K562 (cell line): ENCODE measurements at regions of chr11 and their contacts with region 1.

Region 1: GRCh38 chr11:86938900-86939880 is 16.0 kb downstream of the FZD4 start:
- DNase-seq: peak; percentile 38 to 81 (median 46)
- ATAC-seq: peak; percentile 59
- H3K4me3 ChIP-seq: no peak overlapping the region
- H3K27ac ChIP-seq: peak overlapping the region; percentile 75
- H3K4me1 ChIP-seq: peaks cover 18 to 53% of the 10 kb centered on the region in 2 experiments
- H3K27me3 ChIP-seq: no peaks in the 10 kb centered on the region
- CTCF ChIP-seq: peak; percentile 40 to 79 (median 67); a peak in 5 of 6 replicates
- EP300 ChIP-seq: no peak
- POLR2A ChIP-seq: no peak
- RAD21 ChIP-seq: peak; percentile 70 to 82

Region 2: DNA sequence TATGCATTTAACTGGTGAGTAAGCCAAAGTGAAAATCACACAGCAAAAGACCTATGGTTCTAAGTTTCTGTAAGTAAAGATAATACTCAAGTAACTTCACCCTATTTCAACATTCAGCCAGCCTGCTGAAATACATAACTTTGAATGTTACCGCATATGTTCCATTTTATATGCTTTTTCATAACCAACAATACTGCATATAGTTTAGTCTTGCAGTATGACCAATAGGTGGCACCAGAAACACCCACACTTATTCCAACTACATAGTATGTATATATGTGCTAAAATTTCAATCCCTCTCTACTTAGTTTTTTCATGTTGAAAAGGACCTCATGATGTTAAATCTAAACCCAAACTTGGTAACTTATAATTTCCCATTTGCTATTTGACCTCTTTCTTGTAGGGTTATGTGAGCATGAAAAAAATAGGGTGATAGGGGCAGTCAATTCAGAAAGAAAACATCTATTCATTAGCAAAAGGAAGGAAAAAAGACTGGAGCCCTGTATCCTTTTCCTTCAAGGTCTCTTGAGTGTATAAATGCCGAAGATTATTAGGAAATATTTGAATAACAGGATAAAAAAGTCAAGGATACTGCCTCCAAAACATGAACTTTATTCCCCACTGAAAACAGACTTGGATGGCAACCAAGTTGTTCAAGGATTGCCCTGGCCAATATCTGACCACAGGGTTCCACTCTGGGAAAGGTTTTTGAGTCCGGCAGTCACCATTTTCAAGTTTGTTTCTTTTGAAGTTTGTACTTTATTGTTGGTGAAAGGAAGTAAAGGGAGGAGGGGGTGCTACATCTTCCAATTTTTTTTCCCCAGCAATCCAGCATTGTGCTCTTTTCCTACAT is 39.8 kb after region 1 on chr11:
- CTCF ChIA-PET with region 1: interaction called, 3 read pairs
- POLR2A ChIA-PET with region 1: no interaction called
- in situ Hi-C with region 1: no loop called
- intact Hi-C with region 1: loop called (anchors 5 kb)
- DNase-seq: peak; percentile 22 to 66 (median 36)
- ATAC-seq: peak; percentile 96
- H3K4me3 ChIP-seq: no peak overlapping the region
- H3K27ac ChIP-seq: no peak overlapping the region
- H3K4me1 ChIP-seq: no peaks in the 10 kb centered on the region; a peak in 1 of 5 replicates
- H3K27me3 ChIP-seq: no peaks in the 10 kb centered on the region
- CTCF ChIP-seq: peak; percentile 46 to 78 (median 48); a peak in 5 of 6 replicates
- EP300 ChIP-seq: no peak
- POLR2A ChIP-seq: no peak
- RAD21 ChIP-seq: peak; percentile 53 to 78

Region 3: GRCh38 chr11:87097582-87097981 is 158.4 kb after region 1 on chr11:
- CTCF ChIA-PET with region 1: no interaction called
- POLR2A ChIA-PET with region 1: no interaction called
- in situ Hi-C with region 1: no loop called
- intact Hi-C with region 1: loop called (anchors 5 kb)
- DNase-seq: peak; percentile 62 to 84 (median 66)
- ATAC-seq: peak; percentile 99
- H3K4me3 ChIP-seq: no peak overlapping the region
- H3K27ac ChIP-seq: peak overlapping the region; percentile 48; the same call in 2 of the 3 replicates
- H3K4me1 ChIP-seq: peaks cover 0 to 9% of the 10 kb centered on the region in 2 experiments; a peak in 2 of 5 replicates
- H3K27me3 ChIP-seq: no peaks in the 10 kb centered on the region
- CTCF ChIP-seq: peak; percentile 76 to 81 (median 80)
- EP300 ChIP-seq: no peak
- POLR2A ChIP-seq: no peak
- RAD21 ChIP-seq: peak; percentile 38 to 57; a peak in 3 of 4 replicates

Region 4: DNA sequence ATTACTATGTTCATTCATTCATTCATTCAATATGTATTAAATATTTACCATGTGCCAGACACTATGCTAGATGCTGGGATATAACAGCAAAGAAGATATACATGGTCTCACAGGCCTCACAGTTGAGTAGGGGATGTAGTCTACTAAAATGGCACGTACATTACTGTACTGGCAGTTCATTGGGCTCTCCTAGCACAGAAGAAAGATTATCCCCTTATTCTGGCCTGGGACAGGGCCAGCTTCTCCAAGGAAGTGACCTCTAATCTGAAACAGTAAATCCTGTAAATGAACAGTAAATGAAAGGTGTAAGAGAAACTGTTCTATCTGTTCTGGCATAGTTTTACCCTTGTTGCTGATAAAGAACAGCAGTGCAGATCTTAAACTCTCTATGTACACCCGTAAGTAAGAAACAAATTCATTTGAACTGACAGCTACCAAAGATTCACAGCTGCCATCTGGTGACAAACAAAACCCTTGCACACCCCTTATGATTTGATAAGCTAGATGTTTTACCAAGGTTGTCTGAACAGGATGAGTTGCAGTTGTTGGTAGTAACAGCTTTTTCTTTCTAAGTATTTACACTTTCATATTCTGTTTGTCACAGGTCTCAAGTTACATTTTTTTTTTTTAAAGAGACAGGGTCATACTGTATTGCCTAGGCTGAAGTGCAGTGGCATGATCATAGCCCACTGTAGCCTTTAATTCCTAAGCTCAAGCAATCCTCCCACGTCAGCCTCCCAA is 361.6 kb after region 1 on chr11:
- CTCF ChIA-PET with region 1: no interaction called
- POLR2A ChIA-PET with region 1: interaction called, 3 read pairs
- in situ Hi-C with region 1: loop called (anchors 5 kb)
- intact Hi-C with region 1: no loop called
- DNase-seq: peak in 2 of 4 experiments; percentile 13 to 30
- ATAC-seq: peak; percentile 81
- H3K4me3 ChIP-seq: no peak overlapping the region
- H3K27ac ChIP-seq: peak overlapping the region; percentile 27; the same call in 1 of the 3 replicates
- H3K4me1 ChIP-seq: peaks cover 0 to 16% of the 10 kb centered on the region in 2 experiments; a peak in 3 of 5 replicates
- H3K27me3 ChIP-seq: no peaks in the 10 kb centered on the region
- CTCF ChIP-seq: no peak; a peak in 1 of 6 replicates
- EP300 ChIP-seq: peak; percentile 12; the same call in 1 of the 2 replicates
- POLR2A ChIP-seq: no peak
- RAD21 ChIP-seq: peak in 1 of 2 experiments; percentile 35; a peak in 1 of 4 replicates

Region 5: GRCh38 chr11:87421422-87421821 is 482.2 kb after region 1 on chr11:
- CTCF ChIA-PET with region 1: interaction called, 5 read pairs
- POLR2A ChIA-PET with region 1: no interaction called
- in situ Hi-C with region 1: loop called (anchors 10 kb)
- intact Hi-C with region 1: loop called (anchors 1 kb)
- DNase-seq: peak; percentile 70 to 82 (median 77)
- ATAC-seq: peak; percentile 97
- H3K4me3 ChIP-seq: no peak overlapping the region
- H3K27ac ChIP-seq: no peak overlapping the region
- H3K4me1 ChIP-seq: no peaks in the 10 kb centered on the region
- H3K27me3 ChIP-seq: no peaks in the 10 kb centered on the region
- CTCF ChIP-seq: peak; percentile 62 to 78 (median 66)
- EP300 ChIP-seq: no peak
- POLR2A ChIP-seq: no peak
- RAD21 ChIP-seq: peak; percentile 64 to 85